ENCODE measurements at regions of chr4 and their contacts with region 1.

Region 1: GRCh38 chr4:39365830-39366771 is at the start of gene RFC1:
- DNase-seq: peak; percentile 96
- ATAC-seq: peak; percentile 95
- H3K4me3 ChIP-seq: peak within 1 kb of the TSS; percentile 73 to 98 (median 94)
- H3K4me3 Mint-ChIP-seq: peak within 1 kb of the TSS; percentile 94
- H3K27ac ChIP-seq: peak within 1 kb of the TSS; percentile 65 to 84
- H3K27ac Mint-ChIP-seq: peak within 1 kb of the TSS; percentile 98
- H3K4me1 ChIP-seq: peaks cover 24 to 32% of the 10 kb centered on the region in 2 donors
- H3K4me1 Mint-ChIP-seq: peaks cover 31% of the 10 kb centered on the region
- H3K27me3 ChIP-seq: no peaks in the 10 kb centered on the region
- H3K27me3 Mint-ChIP-seq: no peaks in the 10 kb centered on the region
- CTCF ChIP-seq: no peak
- total RNA-seq, gene RFC1: 55.1 and 66.5 TPM in 2 replicates

Region 2: GRCh38 chr4:37994569-37994968 is 1371.5 kb before region 1 on chr4:
- CTCF ChIA-PET with region 1: no interaction called
- POLR2A ChIA-PET with region 1: no interaction called
- intact Hi-C with region 1: loop called (anchors 5 kb)
- DNase-seq: peak; percentile 25
- ATAC-seq: no peak
- H3K4me3 ChIP-seq: no peak overlapping the region
- H3K4me3 Mint-ChIP-seq: peak overlapping the region; percentile 62
- H3K27ac ChIP-seq: peak overlapping the region; percentile 28 to 43
- H3K27ac Mint-ChIP-seq: peak overlapping the region; percentile 54
- H3K4me1 ChIP-seq: peaks cover 45 to 50% of the 10 kb centered on the region in 2 donors
- H3K4me1 Mint-ChIP-seq: peaks cover 63% of the 10 kb centered on the region
- H3K27me3 ChIP-seq: no peaks in the 10 kb centered on the region
- H3K27me3 Mint-ChIP-seq: no peaks in the 10 kb centered on the region
- CTCF ChIP-seq: no peak

Region 3: DNA sequence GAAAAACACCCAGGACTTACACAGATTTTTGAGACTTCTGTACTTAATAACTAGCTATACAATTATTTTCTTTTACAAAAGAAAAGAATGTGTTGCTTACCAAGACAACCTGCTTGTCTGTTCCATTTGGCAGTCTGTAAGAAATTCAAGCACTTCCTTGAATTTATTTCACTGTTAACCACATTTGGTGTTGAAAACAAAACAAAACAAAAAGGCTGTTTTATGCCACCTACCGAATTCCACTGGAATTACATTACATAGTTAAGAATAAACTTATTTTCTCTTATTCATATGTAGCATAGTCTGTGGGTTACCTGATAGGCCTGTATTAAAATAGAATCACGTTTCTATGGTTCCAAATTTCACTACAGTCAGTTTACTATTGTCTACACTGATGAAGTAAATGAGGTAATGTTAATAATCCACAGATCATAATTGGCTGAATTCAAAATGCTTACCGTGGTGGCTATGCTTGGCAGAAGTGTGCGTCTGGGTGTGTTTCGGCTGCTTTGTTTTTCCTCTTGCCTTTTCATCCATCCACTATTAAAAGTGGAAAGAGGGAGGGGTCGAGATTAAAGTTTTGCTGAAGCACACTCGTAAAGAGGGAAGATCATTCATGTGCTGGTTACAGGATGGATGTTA is 561.3 kb before region 1 on chr4 and contains the start of gene TLR1:
- CTCF ChIA-PET with region 1: interaction called, 3 read pairs
- POLR2A ChIA-PET with region 1: no interaction called
- intact Hi-C with region 1: loop called (anchors 10 kb)
- DNase-seq: peak; percentile 85
- ATAC-seq: peak; percentile 52
- H3K4me3 ChIP-seq: peak within 1 kb of the TSS; percentile 57 to 97 (median 70)
- H3K4me3 Mint-ChIP-seq: peak within 1 kb of the TSS; percentile 80
- H3K27ac ChIP-seq: peak within 1 kb of the TSS; percentile 72 to 97
- H3K27ac Mint-ChIP-seq: peak within 1 kb of the TSS; percentile 95
- H3K4me1 ChIP-seq: peaks cover 32 to 45% of the 10 kb centered on the region in 2 donors
- H3K4me1 Mint-ChIP-seq: peaks cover 56% of the 10 kb centered on the region
- H3K27me3 ChIP-seq: no peaks in the 10 kb centered on the region
- H3K27me3 Mint-ChIP-seq: no peaks in the 10 kb centered on the region
- CTCF ChIP-seq: peak; percentile 75
- total RNA-seq, gene TLR1: 50.8 and 54.1 TPM in 2 replicates

Region 4: DNA sequence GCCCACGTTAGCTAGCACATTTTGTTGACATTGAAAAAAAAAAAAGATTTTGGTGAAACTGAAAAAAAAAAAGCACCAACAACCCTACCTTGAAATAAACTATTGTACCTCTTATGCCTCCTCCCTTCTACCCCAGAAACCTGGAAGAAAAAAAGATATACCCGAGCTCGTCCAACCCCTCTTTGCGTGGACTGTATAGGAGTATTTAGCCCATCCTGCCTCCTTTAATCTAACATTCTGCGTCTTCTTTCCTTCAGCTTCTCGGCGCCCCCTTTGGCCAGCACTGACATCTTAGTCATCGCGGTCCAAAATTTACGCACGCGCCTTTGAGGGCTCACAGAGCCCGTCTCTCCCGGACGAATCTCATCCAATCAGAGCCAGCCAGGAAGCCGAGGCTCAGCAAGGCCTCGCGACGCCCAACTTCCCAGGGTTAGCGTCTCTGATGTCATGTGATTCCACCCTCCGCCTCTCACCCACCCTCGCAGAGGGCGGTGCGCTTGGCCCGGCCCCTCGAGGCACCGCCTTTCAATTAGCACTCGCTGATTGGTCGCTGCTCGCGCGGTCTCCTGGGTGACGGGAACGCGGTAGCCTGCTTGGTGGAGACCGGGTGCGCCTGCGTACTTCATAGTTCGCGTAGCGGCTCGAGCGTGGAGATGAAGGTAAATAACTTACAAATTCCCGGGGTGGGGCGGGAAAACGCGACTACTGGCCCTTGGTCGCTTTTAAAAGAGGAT is 184.0 kb before region 1 on chr4 and contains the start of gene WDR19:
- CTCF ChIA-PET with region 1: interaction called, 3 read pairs
- POLR2A ChIA-PET with region 1: no interaction called
- intact Hi-C with region 1: loop called (anchors 2 kb)
- DNase-seq: peak; percentile 99
- ATAC-seq: peak; percentile 96
- H3K4me3 ChIP-seq: peak within 1 kb of the TSS; percentile 76 to 99 (median 94)
- H3K4me3 Mint-ChIP-seq: peak within 1 kb of the TSS; percentile 47
- H3K27ac ChIP-seq: peak within 1 kb of the TSS; percentile 12 to 79
- H3K27ac Mint-ChIP-seq: no peak within 1 kb of the TSS
- H3K4me1 ChIP-seq: peaks cover 12 to 16% of the 10 kb centered on the region in 2 donors
- H3K4me1 Mint-ChIP-seq: peaks cover 8% of the 10 kb centered on the region
- H3K27me3 ChIP-seq: no peaks in the 10 kb centered on the region
- H3K27me3 Mint-ChIP-seq: no peaks in the 10 kb centered on the region
- CTCF ChIP-seq: peak; percentile 73
- total RNA-seq, gene WDR19: 79.8 and 83.2 TPM in 2 replicates

Region 5: GRCh38 chr4:39353478-39354253 is 12.4 kb before region 1 on chr4:
- CTCF ChIA-PET with region 1: interaction called, 11 read pairs
- POLR2A ChIA-PET with region 1: interaction called, 4 read pairs
- intact Hi-C with region 1: loop called (anchors 1 kb)
- DNase-seq: peak; percentile 67
- ATAC-seq: peak; percentile 59
- H3K4me3 ChIP-seq: peak overlapping the region; percentile 2 to 72 (median 43)
- H3K4me3 Mint-ChIP-seq: peak overlapping the region; percentile 90
- H3K27ac ChIP-seq: peak overlapping the region; percentile 46 to 74
- H3K27ac Mint-ChIP-seq: peak overlapping the region; percentile 89
- H3K4me1 ChIP-seq: peaks cover 50 to 54% of the 10 kb centered on the region in 2 donors
- H3K4me1 Mint-ChIP-seq: peaks cover 54% of the 10 kb centered on the region
- H3K27me3 ChIP-seq: no peaks in the 10 kb centered on the region
- H3K27me3 Mint-ChIP-seq: no peaks in the 10 kb centered on the region
- CTCF ChIP-seq: no peak

Region 6: DNA sequence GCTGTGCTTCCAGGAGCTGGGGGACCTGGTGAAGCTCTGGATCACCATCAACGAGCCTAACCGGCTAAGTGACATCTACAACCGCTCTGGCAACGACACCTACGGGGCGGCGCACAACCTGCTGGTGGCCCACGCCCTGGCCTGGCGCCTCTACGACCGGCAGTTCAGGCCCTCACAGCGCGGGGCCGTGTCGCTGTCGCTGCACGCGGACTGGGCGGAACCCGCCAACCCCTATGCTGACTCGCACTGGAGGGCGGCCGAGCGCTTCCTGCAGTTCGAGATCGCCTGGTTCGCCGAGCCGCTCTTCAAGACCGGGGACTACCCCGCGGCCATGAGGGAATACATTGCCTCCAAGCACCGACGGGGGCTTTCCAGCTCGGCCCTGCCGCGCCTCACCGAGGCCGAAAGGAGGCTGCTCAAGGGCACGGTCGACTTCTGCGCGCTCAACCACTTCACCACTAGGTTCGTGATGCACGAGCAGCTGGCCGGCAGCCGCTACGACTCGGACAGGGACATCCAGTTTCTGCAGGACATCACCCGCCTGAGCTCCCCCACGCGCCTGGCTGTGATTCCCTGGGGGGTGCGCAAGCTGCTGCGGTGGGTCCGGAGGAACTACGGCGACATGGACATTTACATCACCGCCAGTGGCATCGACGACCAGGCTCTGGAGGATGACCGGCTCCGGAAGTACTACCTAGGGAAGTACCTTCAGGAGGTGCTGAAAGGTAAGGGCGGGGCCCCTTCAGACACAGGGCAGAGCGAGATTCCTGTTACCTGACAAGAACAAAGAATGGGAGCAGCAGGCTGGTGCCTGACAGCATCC is 80.9 kb after region 1 on chr4:
- CTCF ChIA-PET with region 1: interaction called, 4 read pairs
- POLR2A ChIA-PET with region 1: interaction called, 7 read pairs
- intact Hi-C with region 1: loop called (anchors 2 kb)
- DNase-seq: peak; percentile 94
- ATAC-seq: peak; percentile 94
- H3K4me3 ChIP-seq: peak overlapping the region; percentile 12 to 64 (median 52)
- H3K4me3 Mint-ChIP-seq: peak overlapping the region; percentile 89
- H3K27ac ChIP-seq: peak overlapping the region; percentile 69
- H3K27ac Mint-ChIP-seq: peak overlapping the region; percentile 91
- H3K4me1 ChIP-seq: peaks cover 13 to 18% of the 10 kb centered on the region in 2 donors
- H3K4me1 Mint-ChIP-seq: peaks cover 23% of the 10 kb centered on the region
- H3K27me3 ChIP-seq: no peaks in the 10 kb centered on the region
- H3K27me3 Mint-ChIP-seq: no peaks in the 10 kb centered on the region
- CTCF ChIP-seq: peak; percentile 51

Region 7: GRCh38 chr4:39458505-39459300 is 92.6 kb after region 1 on chr4 and contains the starts of genes LIAS and RPL9:
- CTCF ChIA-PET with region 1: no interaction called
- POLR2A ChIA-PET with region 1: interaction called, 11 read pairs
- intact Hi-C with region 1: loop called (anchors 1 kb)
- DNase-seq: peak; percentile 98
- ATAC-seq: peak; percentile 86
- H3K4me3 ChIP-seq: peak within 1 kb of the TSS; percentile 77 to 100 (median 98)
- H3K4me3 Mint-ChIP-seq: peak within 1 kb of the TSS; percentile 97
- H3K27ac ChIP-seq: peak within 1 kb of the TSS; percentile 98 to 99
- H3K27ac Mint-ChIP-seq: peak within 1 kb of the TSS; percentile 99
- H3K4me1 ChIP-seq: peaks cover 19 to 27% of the 10 kb centered on the region in 2 donors
- H3K4me1 Mint-ChIP-seq: peaks cover 38% of the 10 kb centered on the region
- H3K27me3 ChIP-seq: no peaks in the 10 kb centered on the region
- H3K27me3 Mint-ChIP-seq: no peaks in the 10 kb centered on the region
- CTCF ChIP-seq: no peak
- total RNA-seq, gene LIAS: 20.9 and 24.7 TPM in 2 replicates
- total RNA-seq, gene RPL9: 2,031 and 2,048 TPM in 2 replicates